Activated naive CD4-positive, alpha-beta T cell treated with anti-CD3 and anti-CD28 coated beads for 36 hours (primary cell): ENCODE measurements at regions of chr12 and their contacts with region 1.

Region 1: GRCh38 chr12:9741726-9742125 is 8.8 kb upstream of the CLECL1 start:
- DNase-seq: peak; percentile 91
- H3K4me3 Mint-ChIP-seq: peak overlapping the region; percentile 70
- H3K27ac Mint-ChIP-seq: peak overlapping the region; percentile 60
- H3K4me1 Mint-ChIP-seq: peaks cover 66% of the 10 kb centered on the region
- H3K27me3 Mint-ChIP-seq: no peaks in the 10 kb centered on the region

Region 2: DNA sequence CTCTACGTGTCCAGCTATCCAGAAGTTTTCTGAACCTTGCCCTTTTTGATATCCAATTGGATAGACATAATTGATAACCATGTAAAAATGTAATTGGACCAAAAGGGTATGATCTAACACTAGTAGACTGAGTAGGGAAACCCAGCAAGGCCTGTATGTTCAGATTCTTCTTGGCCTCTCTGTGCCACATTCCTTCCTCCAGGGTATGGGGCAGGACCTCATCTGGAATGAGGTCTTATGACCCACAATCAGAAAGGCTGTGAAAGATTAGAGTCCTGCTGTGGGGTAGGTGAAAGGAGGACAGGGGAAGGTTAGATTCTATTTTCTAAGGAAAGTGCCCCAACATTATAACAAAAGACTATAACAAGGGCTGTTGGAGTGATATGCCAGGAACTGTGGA is 970.7 kb before region 1 on chr12:
- CTCF ChIA-PET with region 1: no interaction called
- intact Hi-C with region 1: no loop called
- DNase-seq: no peak
- H3K4me3 Mint-ChIP-seq: no peak overlapping the region
- H3K27ac Mint-ChIP-seq: no peak overlapping the region
- H3K4me1 Mint-ChIP-seq: no peaks in the 10 kb centered on the region
- H3K27me3 Mint-ChIP-seq: no peaks in the 10 kb centered on the region

Region 3: DNA sequence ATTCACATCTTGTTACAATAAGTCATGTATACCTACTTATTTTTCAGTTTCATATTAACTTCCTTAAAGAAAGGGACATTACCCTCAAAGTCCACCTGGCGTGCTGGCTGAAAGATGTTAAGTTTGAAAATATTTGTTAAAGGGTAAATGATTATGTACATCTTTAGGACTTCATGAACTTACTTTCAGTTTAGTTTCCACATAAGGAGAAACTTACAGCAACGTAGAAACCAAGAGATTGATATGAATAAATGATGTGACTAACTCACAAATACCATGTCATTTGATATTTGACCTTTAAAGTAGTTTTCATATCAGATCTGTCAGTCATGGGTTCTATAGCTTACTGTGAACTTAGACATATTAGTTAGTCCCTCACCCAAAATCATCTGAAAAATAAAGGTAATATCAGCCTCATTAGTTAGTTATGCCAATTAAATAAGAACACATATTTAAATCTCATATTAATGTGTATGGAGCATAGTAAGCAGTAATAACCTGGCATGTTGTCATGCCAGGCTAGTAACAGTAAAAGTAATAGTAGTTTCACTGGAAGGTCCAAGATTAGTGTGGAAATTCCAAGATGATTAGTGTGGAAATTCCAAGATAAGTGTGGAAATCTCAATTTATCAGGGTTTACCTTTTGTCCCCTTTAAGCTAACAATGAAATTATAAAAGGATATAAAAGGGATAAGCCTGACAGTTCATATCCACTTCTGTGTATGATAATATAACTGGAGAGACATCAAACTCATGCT is 74.1 kb before region 1 on chr12:
- CTCF ChIA-PET with region 1: interaction called, 7 read pairs
- intact Hi-C with region 1: loop called (anchors 1 kb)
- DNase-seq: peak; percentile 50
- H3K4me3 Mint-ChIP-seq: peak overlapping the region; percentile 90
- H3K27ac Mint-ChIP-seq: peak overlapping the region; percentile 97
- H3K4me1 Mint-ChIP-seq: peaks cover 56% of the 10 kb centered on the region
- H3K27me3 Mint-ChIP-seq: no peaks in the 10 kb centered on the region

Region 4: GRCh38 chr12:9797722-9798619 is 56.2 kb after region 1 on chr12:
- CTCF ChIA-PET with region 1: interaction called, 537 read pairs
- intact Hi-C with region 1: no loop called
- DNase-seq: peak; percentile 84
- H3K4me3 Mint-ChIP-seq: peak overlapping the region; percentile 0
- H3K27ac Mint-ChIP-seq: peak overlapping the region; percentile 98
- H3K4me1 Mint-ChIP-seq: peaks cover 40% of the 10 kb centered on the region
- H3K27me3 Mint-ChIP-seq: no peaks in the 10 kb centered on the region

Region 5: DNA sequence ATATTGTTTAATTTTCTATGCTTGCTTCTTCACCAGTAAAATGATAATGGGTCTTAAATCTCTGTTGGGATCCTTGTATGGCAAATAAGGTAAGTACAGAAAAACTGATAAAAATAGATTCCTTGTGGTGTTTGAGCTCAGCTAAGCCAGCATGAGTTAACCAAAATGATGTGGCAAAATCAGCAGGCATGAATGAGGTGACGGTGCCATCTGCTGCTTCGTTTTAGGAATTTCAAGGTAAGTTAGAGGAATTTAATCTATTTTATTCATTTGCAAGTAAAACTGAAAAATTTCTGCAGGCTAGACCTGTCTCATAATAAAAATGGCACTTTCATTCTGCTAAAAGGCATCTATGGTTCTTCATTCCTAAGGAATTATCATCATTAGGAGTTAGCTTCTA is 398.3 kb after region 1 on chr12:
- CTCF ChIA-PET with region 1: interaction called, 10 read pairs
- intact Hi-C with region 1: no loop called
- DNase-seq: peak; percentile 73
- H3K4me3 Mint-ChIP-seq: no peak overlapping the region
- H3K27ac Mint-ChIP-seq: no peak overlapping the region
- H3K4me1 Mint-ChIP-seq: peaks cover 2% of the 10 kb centered on the region
- H3K27me3 Mint-ChIP-seq: peaks cover 2% of the 10 kb centered on the region

Region 6: DNA sequence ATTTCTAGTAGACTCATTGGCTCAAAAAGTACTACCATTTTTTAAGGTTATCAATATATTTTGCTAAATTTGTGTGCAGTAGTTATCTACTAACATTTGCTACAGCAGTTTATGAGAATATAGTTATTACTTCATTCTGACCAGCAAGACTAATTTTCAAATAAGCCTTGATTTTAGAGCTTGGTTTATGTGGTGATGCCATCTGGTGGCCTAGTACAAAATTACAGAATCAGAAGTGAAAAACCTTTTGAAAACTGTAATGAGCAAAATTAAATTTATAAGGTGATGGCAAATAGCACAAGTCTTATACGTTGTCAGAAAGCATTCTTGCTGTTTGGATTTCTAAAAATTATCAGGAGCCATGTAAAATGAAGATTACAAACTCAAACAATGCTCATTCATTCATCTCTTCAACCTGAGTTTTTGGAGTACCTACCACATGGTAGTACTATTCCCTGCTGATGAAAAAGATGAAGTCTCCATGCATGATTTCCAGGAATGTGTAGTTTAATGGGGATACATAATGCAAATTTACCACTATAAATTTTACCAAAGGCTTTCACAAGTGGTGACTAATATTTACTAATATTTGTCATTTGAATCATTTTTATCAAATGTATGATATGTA is 820.7 kb after region 1 on chr12:
- CTCF ChIA-PET with region 1: no interaction called
- intact Hi-C with region 1: loop called (anchors 5 kb)
- DNase-seq: peak; percentile 36
- H3K4me3 Mint-ChIP-seq: no peak overlapping the region
- H3K27ac Mint-ChIP-seq: no peak overlapping the region
- H3K4me1 Mint-ChIP-seq: peaks cover 5% of the 10 kb centered on the region
- H3K27me3 Mint-ChIP-seq: peaks cover 15% of the 10 kb centered on the region